Heart left ventricle (tissue), 16 donors: ENCODE measurements at regions of chr4 and their contacts with region 1.

Region 1: DNA sequence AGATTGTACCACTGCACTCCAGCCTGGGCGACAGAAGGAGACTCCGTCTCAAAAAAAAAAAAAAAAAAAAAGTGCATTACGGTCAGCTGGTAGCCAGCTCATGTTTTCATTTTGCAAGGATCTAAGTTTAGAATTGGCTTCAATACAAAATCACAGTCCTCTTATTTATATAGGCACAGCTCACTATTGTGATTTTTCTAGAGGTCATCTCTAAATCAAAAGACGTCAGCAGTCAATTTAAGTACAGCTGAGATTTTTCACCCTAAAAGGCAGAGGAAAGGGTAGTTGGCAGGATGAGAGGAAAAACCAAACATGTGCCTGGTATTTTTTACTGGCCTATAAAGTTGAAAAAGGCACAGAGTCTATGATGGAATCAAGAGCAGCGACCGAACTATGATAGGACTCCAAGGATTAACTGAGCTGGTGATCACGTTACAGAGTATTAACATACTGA is 30.8 kb downstream of the ASB5 start:
- DNase-seq: no peak
- ATAC-seq: peak; percentile 74 to 89 (median 82)
- H3K4me3 ChIP-seq: peak overlapping the region in 6 of 12 donors; percentile 6 to 15 (median 8)
- H3K27ac ChIP-seq: peak overlapping the region; percentile 71 to 94 (median 84)
- H3K4me1 ChIP-seq: peaks cover 0 to 25% (median 7%) of the 10 kb centered on the region in 12 donors
- H3K27me3 ChIP-seq: no peaks in the 10 kb centered on the region
- CTCF ChIP-seq: no peak
- POLR2A ChIP-seq: no peak

Region 2: DNA sequence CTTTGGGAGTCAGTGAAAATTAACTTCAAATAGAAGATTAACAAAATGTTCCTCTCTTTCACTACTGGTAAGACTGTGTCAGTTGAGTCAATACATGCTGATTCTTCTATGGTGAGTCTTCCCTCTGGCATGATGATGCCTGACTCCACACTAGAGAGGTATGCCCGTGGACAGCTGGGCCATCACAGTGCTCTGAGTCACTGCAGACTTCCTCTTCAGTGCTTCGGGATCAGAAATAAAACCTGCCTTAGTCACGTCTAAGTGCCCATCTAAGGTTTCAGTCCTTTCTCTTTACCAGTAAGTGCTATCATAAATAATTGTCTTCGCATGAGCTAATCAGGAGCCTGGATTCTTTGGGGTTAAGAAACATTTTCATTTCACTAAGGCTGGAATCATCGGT is 32.5 kb after region 1 on chr4:
- intact Hi-C with region 1: loop called in 3 of 10 experiments (anchors 5 kb)
- DNase-seq: no peak
- ATAC-seq: peak in 1 of 4 donors; percentile 42
- H3K4me3 ChIP-seq: no peak overlapping the region
- H3K27ac ChIP-seq: peak overlapping the region in 1 of 12 donors; percentile 66
- H3K4me1 ChIP-seq: peaks cover 0 to 7% (median 0%) of the 10 kb centered on the region in 12 donors
- H3K27me3 ChIP-seq: no peaks in the 10 kb centered on the region
- CTCF ChIP-seq: no peak
- POLR2A ChIP-seq: no peak

Region 3: DNA sequence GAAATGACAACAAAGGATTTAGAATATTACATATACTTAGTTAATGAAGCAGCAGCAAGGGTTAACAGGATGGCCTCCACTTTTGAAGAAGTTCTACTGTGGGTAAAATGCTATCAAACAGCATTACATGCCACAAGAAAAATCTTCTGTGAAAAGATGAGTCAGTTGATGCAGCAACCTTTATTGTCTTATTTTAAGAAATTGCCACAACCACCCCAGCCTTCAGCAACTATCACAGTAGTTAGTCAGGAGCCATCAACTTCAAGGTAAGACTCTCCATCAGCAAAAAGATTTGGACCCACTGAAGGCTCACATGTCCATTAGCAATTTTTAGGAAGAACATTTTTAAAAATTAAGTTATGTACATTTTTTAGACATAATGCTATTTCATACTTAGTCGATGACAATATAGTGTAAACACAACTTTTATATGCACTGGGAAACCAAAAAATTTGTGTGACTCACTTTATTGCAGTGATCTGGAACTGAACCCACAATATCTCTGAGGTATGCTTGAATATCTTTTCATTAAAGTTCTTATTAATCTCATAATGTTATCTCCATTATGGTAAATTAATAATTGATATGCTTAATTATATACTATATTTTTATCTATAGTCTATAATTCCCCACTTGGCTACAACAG is 162.8 kb after region 1 on chr4:
- intact Hi-C with region 1: no loop called
- DNase-seq: no peak
- ATAC-seq: no peak
- H3K4me3 ChIP-seq: no peak overlapping the region
- H3K27ac ChIP-seq: no peak overlapping the region
- H3K4me1 ChIP-seq: no peaks in the 10 kb centered on the region
- H3K27me3 ChIP-seq: no peaks in the 10 kb centered on the region
- CTCF ChIP-seq: no peak
- POLR2A ChIP-seq: no peak